ENCODE measurements at regions of chr5 and their contacts with region 1.

Region 1: GRCh38 chr5:138641547-138642298 is 66.5 kb upstream of the HSPA9 start:
- DNase-seq: peak; percentile 69 to 80 (median 78)
- ATAC-seq: peak; percentile 93
- H3K4me3 ChIP-seq: no peak overlapping the region
- H3K27ac ChIP-seq: no peak overlapping the region
- H3K4me1 ChIP-seq: peaks cover 2 to 3% of the 10 kb centered on the region in 2 experiments; a peak in 2 of 5 replicates
- H3K27me3 ChIP-seq: peaks cover 31 to 66% of the 10 kb centered on the region in 2 experiments
- CTCF ChIP-seq: peak; percentile 82 to 94 (median 90)
- EP300 ChIP-seq: peak; percentile 33; the same call in 1 of the 2 replicates
- POLR2A ChIP-seq: no peak
- RAD21 ChIP-seq: peak; percentile 59 to 86

Region 2: DNA sequence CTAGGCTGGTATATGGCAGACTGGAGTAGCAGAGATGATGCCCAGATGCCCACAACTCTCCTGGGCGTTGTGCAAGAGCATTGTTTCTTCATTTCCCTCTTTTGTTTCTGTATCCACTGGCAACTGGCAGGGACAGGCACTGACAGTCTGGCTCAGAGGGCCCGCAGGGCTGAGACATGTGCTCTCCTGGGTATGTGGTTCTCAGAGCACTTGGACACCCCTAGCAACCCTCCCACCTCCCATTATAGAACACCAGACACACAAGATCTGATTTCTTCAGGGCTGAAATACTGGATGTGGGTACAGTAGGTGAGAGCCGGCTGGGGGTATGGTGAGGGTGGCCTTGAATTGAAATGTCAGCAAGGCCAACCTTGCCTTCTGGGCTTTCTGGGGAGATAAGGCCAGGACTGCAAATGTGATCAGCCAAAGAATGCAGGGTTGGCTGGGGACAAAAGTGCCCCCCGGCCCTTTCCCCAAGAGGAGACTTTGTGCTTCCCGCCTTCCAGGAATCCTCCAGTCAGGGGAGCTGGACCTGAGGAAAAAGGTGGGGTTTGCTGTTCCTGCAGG is 82.9 kb after region 1 on chr5:
- CTCF ChIA-PET with region 1: no interaction called
- POLR2A ChIA-PET with region 1: no interaction called
- in situ Hi-C with region 1: no loop called
- intact Hi-C with region 1: loop called (anchors 5 kb)
- DNase-seq: no peak
- ATAC-seq: no peak
- H3K4me3 ChIP-seq: no peak overlapping the region
- H3K27ac ChIP-seq: no peak overlapping the region
- H3K4me1 ChIP-seq: peaks cover 0 to 5% of the 10 kb centered on the region in 2 experiments; a peak in 2 of 5 replicates
- H3K27me3 ChIP-seq: no peaks in the 10 kb centered on the region; a peak in 2 of 5 replicates
- CTCF ChIP-seq: no peak
- EP300 ChIP-seq: no peak
- POLR2A ChIP-seq: no peak
- RAD21 ChIP-seq: no peak

Region 3: DNA sequence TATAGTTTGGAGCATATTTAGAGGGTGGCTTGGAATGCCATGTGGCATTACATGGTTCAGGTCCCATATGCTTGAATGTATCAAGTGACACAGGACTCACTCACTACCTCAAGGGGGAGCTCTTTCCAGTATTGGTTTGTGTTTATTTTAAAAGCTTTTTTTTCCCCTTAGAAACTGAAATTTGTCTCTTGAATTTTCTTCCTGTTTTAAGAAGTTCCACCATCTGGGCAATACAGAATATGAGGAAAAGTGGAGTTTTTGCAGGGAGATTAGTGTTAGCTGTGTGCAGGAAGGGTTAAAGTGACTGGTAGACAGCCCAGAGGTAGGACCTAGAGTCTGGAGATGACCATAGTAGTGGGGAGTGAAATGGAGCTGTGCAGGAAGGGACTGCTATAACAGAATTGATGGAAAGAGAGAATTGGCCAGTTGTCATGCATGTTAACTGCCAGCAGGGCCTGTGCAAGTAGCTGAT is 148.1 kb after region 1 on chr5:
- CTCF ChIA-PET with region 1: no interaction called
- POLR2A ChIA-PET with region 1: no interaction called
- in situ Hi-C with region 1: no loop called
- intact Hi-C with region 1: loop called (anchors 10 kb)
- DNase-seq: peak; percentile 39 to 62 (median 49)
- ATAC-seq: peak; percentile 94
- H3K4me3 ChIP-seq: no peak overlapping the region
- H3K27ac ChIP-seq: no peak overlapping the region
- H3K4me1 ChIP-seq: no peaks in the 10 kb centered on the region
- H3K27me3 ChIP-seq: no peaks in the 10 kb centered on the region
- CTCF ChIP-seq: peak; percentile 48 to 73 (median 72)
- EP300 ChIP-seq: no peak
- POLR2A ChIP-seq: no peak
- RAD21 ChIP-seq: peak in 1 of 2 experiments; percentile 37; a peak in 2 of 4 replicates

Region 4: DNA sequence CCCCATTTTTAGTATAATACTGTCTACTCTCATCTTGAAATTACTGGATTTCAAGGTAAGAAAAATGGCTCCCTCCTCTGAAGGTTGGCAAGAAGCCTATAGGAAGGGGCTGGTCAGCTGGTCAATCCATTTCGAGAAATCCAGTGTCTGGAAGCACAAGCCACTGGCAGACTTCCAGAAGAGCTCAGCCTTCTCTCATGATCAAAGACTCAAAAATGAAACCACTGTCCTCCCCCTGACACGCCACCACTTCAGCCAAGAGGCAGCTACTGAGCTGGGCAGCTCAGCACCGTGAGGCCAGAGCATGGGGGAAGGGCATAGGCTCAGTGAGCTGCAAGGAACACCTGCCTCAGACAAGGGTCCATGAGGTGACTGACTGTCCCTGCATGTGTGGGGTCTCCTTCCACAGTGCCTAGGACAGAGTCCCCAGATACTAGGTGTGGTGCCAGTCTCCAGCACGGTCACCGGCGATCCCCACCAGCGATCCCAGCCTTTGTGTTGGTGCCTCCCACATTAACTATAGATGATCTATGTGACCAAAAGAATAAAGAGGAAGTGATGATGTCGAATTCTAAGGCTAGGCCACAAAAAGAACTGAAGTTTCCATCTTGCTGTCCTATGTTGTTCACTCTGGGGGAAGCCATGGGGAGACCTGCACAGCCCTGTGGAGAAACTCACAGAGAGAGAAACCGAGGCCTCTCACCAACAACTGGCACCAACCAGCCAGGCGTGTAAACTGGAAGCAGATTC is 333.6 kb after region 1 on chr5:
- CTCF ChIA-PET with region 1: no interaction called
- POLR2A ChIA-PET with region 1: interaction called, 3 read pairs
- in situ Hi-C with region 1: no loop called
- intact Hi-C with region 1: loop called (anchors 10 kb)
- DNase-seq: peak in 2 of 4 experiments; percentile 34 to 73
- ATAC-seq: peak; percentile 35
- H3K4me3 ChIP-seq: no peak overlapping the region
- H3K27ac ChIP-seq: peak overlapping the region; percentile 47; the same call in 1 of the 3 replicates
- H3K4me1 ChIP-seq: peaks cover 13 to 35% of the 10 kb centered on the region in 2 experiments
- H3K27me3 ChIP-seq: no peaks in the 10 kb centered on the region; a peak in 1 of 5 replicates
- CTCF ChIP-seq: no peak
- EP300 ChIP-seq: no peak
- POLR2A ChIP-seq: no peak
- RAD21 ChIP-seq: no peak

Region 5: GRCh38 chr5:139262742-139263445 is 621.2 kb after region 1 on chr5:
- CTCF ChIA-PET with region 1: no interaction called
- POLR2A ChIA-PET with region 1: no interaction called
- in situ Hi-C with region 1: no loop called
- intact Hi-C with region 1: loop called (anchors 2 kb)
- DNase-seq: peak; percentile 72 to 87 (median 78)
- ATAC-seq: peak; percentile 98
- H3K4me3 ChIP-seq: no peak overlapping the region
- H3K27ac ChIP-seq: peak overlapping the region; percentile 34; the same call in 2 of the 3 replicates
- H3K4me1 ChIP-seq: peaks cover 0 to 12% of the 10 kb centered on the region in 2 experiments; a peak in 4 of 5 replicates
- H3K27me3 ChIP-seq: no peaks in the 10 kb centered on the region
- CTCF ChIP-seq: peak; percentile 87 to 93 (median 88)
- EP300 ChIP-seq: peak; percentile 7; the same call in 1 of the 2 replicates
- POLR2A ChIP-seq: no peak
- RAD21 ChIP-seq: peak; percentile 95

Measured in K562 (cell line).